ENCODE measurements at regions of chr9 and their contacts with region 1.

Region 1: GRCh38 chr9:108412755-108413154 is 443.0 kb downstream of the ACTL7B start:
- DNase-seq: no peak
- ATAC-seq: no peak
- H3K4me3 ChIP-seq: no peak overlapping the region
- H3K27ac ChIP-seq: no peak overlapping the region
- H3K4me1 ChIP-seq: no peaks in the 10 kb centered on the region
- H3K27me3 ChIP-seq: no peaks in the 10 kb centered on the region
- CTCF ChIP-seq: no peak

Region 2: GRCh38 chr9:108468402-108468801 is 55.6 kb after region 1 on chr9:
- intact Hi-C with region 1: loop called in 1 of 2 experiments (anchors 5 kb)
- DNase-seq: peak; percentile 45 to 61
- ATAC-seq: peak; percentile 36 to 61 (median 55)
- H3K4me3 ChIP-seq: no peak overlapping the region
- H3K27ac ChIP-seq: peak overlapping the region; percentile 43
- H3K4me1 ChIP-seq: peaks cover 19% of the 10 kb centered on the region
- H3K27me3 ChIP-seq: no peaks in the 10 kb centered on the region
- CTCF ChIP-seq: peak; percentile 45